PC-3 (cell line): ENCODE measurements at regions of chr10 and their contacts with region 1.

Region 1: DNA sequence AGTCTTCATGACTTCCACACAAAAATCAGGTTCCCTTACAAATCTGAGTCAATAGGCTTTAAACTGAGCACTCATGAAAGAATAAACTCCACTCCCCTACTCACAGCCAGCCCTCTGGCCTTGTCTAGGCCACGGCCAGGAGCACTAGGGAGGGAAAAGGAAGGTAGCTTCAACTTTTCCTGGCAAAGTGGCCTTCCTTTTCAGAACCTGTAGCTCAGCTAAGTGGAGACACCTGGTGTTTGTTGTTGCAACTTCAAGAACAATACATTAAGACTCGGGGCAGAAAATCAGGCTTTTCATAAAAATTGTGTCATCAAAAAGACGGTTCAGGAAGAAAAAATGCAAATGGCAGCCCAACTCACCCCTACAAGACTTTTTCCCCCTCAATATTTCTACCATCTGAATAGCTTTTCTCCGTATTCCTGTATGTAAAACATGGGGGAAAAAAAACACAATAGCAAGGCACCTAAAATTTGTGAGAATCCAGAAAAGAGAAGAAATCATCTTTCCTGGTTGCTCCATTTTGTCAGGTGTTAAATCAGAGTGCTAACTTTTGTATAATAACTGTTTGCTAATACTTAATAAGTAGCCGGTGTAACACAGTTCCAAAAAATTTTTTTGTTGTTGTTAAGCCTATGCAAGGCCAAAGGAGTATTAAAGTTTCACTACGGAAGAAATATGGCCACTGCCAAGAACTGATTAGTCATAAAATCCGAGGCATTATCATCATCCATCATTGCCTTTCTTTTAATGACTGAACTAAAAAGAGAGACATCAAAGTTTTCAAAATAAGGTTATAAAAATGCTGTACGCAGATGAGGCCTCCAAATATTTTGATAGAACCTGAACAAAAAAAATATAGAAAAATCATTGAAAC is 66.2 kb upstream of the ARID5B start:
- DNase-seq: peak; percentile 96
- ATAC-seq: peak; percentile 34
- H3K4me3 ChIP-seq: peak overlapping the region; percentile 25
- H3K27ac ChIP-seq: peak overlapping the region; percentile 66
- H3K4me1 ChIP-seq: peaks cover 50% of the 10 kb centered on the region
- H3K27me3 ChIP-seq: no peaks in the 10 kb centered on the region
- CTCF ChIP-seq: peak; percentile 99

Region 2: DNA sequence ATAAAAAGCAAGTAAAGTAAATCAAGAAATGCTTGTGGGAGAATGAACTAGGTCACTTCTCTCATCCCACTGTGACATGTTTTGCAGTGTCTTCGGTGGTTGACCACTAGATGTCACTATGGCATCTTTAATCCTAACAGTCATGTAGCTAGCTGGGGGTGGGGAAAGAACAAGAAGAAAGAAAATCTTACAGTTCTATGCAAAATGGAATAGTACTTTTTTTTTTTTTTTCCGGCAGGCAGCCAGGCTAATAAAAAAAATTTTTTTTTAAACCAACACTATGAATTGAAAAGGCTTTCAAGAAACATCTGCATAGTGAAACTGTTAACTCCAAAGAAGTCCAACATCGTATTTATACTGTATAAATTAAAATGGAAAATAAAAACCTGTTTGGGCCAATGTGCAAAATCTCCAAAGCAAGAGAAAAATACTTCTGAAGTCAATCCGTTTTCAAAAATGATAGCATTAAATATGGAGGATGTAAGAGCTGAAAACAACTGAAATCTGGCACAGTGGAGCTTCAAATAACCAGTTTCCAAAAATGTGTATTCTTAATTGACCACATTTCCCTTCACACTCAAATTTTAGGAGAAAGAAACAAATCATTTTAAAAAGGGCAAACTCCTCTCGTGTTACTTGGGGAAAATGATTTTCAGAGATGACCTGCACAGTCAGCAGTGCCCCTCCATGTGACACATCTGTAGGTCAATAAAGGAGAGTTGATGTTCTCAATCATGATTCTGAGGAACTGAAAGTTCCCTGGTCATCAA is 1018.5 kb before region 1 on chr10:
- CTCF ChIA-PET with region 1: no interaction called
- POLR2A ChIA-PET with region 1: no interaction called
- intact Hi-C with region 1: loop called (anchors 2 kb)
- DNase-seq: peak; percentile 97
- ATAC-seq: peak; percentile 93
- H3K4me3 ChIP-seq: no peak overlapping the region
- H3K27ac ChIP-seq: no peak overlapping the region
- H3K4me1 ChIP-seq: peaks cover 6% of the 10 kb centered on the region; the same call in 1 of the 2 replicates
- H3K27me3 ChIP-seq: no peaks in the 10 kb centered on the region
- CTCF ChIP-seq: peak; percentile 100

Region 3: GRCh38 chr10:61606951-61607907 is 228.1 kb before region 1 on chr10:
- CTCF ChIA-PET with region 1: no interaction called
- POLR2A ChIA-PET with region 1: no interaction called
- intact Hi-C with region 1: loop called (anchors 1 kb)
- DNase-seq: peak; percentile 84
- ATAC-seq: peak; percentile 90
- H3K4me3 ChIP-seq: no peak overlapping the region
- H3K27ac ChIP-seq: no peak overlapping the region
- H3K4me1 ChIP-seq: no peaks in the 10 kb centered on the region
- H3K27me3 ChIP-seq: no peaks in the 10 kb centered on the region
- CTCF ChIP-seq: peak; percentile 99

Region 4: GRCh38 chr10:61750929-61751471 is 84.3 kb before region 1 on chr10:
- CTCF ChIA-PET with region 1: interaction called, 76 read pairs
- POLR2A ChIA-PET with region 1: interaction called, 16 read pairs
- intact Hi-C with region 1: loop called (anchors 1 kb)
- DNase-seq: peak; percentile 98
- ATAC-seq: peak; percentile 83
- H3K4me3 ChIP-seq: no peak overlapping the region
- H3K27ac ChIP-seq: peak overlapping the region; percentile 48
- H3K4me1 ChIP-seq: peaks cover 26% of the 10 kb centered on the region
- H3K27me3 ChIP-seq: no peaks in the 10 kb centered on the region
- CTCF ChIP-seq: peak; percentile 100

Region 5: DNA sequence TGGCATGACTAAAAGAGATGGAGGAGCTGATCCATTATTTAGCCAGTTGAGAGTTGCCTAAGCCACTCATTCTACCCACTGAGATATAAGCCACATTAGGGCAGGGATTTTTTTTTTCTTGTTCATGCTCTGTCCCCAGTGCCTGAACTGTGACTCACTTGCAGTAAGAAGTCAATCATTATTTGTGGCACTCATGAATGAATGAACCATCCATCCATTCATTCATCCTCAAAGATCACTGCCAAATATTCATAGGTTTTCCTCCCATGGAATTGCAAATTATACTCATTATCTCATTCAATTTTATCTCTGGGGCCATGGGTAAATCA is 43.4 kb after region 1 on chr10:
- CTCF ChIA-PET with region 1: no interaction called
- POLR2A ChIA-PET with region 1: no interaction called
- intact Hi-C with region 1: no loop called
- DNase-seq: no peak
- ATAC-seq: no peak
- H3K4me3 ChIP-seq: no peak overlapping the region
- H3K27ac ChIP-seq: no peak overlapping the region
- H3K4me1 ChIP-seq: peaks cover 13% of the 10 kb centered on the region
- H3K27me3 ChIP-seq: no peaks in the 10 kb centered on the region
- CTCF ChIP-seq: no peak

Region 6: GRCh38 chr10:61896854-61897661 is 61.8 kb after region 1 on chr10:
- CTCF ChIA-PET with region 1: interaction called, 30 read pairs
- POLR2A ChIA-PET with region 1: interaction called, 15 read pairs
- intact Hi-C with region 1: loop called (anchors 1 kb)
- DNase-seq: peak; percentile 91
- ATAC-seq: no peak; the same call in 1 of the 2 replicates
- H3K4me3 ChIP-seq: no peak overlapping the region
- H3K27ac ChIP-seq: no peak overlapping the region
- H3K4me1 ChIP-seq: peaks cover 38% of the 10 kb centered on the region
- H3K27me3 ChIP-seq: no peaks in the 10 kb centered on the region
- CTCF ChIP-seq: peak; percentile 99

Region 7: DNA sequence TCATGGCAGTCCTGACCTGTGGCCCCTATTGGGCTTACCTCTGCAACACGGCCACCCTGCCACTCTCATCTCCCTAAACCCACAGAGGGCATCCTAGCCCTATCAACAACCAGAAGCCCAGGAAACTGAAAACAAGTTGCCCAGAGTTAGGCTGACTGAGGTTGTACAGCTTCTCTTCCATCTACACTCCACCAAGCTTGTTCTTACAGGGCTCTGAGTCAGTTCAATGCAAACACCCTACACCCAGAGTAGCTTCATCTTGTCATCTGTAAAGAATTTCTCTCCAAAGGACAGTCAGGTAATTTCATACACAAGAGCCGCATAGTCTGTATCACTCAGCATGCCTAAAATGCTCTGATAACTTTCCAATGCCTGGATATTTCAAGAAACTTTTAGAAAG is 241.6 kb after region 1 on chr10:
- CTCF ChIA-PET with region 1: interaction called, 3 read pairs
- POLR2A ChIA-PET with region 1: no interaction called
- intact Hi-C with region 1: loop called (anchors 1 kb)
- DNase-seq: peak; percentile 100
- ATAC-seq: peak; percentile 99
- H3K4me3 ChIP-seq: peak overlapping the region; percentile 31
- H3K27ac ChIP-seq: peak overlapping the region; percentile 61
- H3K4me1 ChIP-seq: peaks cover 45% of the 10 kb centered on the region
- H3K27me3 ChIP-seq: no peaks in the 10 kb centered on the region
- CTCF ChIP-seq: peak; percentile 95